ENCODE measurements at regions of chr10 and their contacts with region 1.

Region 1: GRCh38 chr10:124176349-124177176 is 83.2 kb upstream of the CHST15 start:
- DNase-seq: no peak
- H3K4me3 ChIP-seq: no peak overlapping the region
- H3K27ac ChIP-seq: no peak overlapping the region
- H3K4me1 ChIP-seq: no peaks in the 10 kb centered on the region
- H3K27me3 ChIP-seq: no peaks in the 10 kb centered on the region
- CTCF ChIP-seq: no peak
- POLR2A ChIP-seq: no peak

Region 2: GRCh38 chr10:123548770-123549169 is 627.8 kb before region 1 on chr10:
- intact Hi-C with region 1: loop called (anchors 10 kb)
- DNase-seq: no peak
- H3K4me3 ChIP-seq: no peak overlapping the region
- H3K27ac ChIP-seq: no peak overlapping the region
- H3K4me1 ChIP-seq: no peaks in the 10 kb centered on the region
- H3K27me3 ChIP-seq: peaks cover 0 to 26% of the 10 kb centered on the region in 2 donors
- CTCF ChIP-seq: no peak
- POLR2A ChIP-seq: no peak

Region 3: GRCh38 chr10:124063750-124064603 is 112.6 kb before region 1 on chr10:
- intact Hi-C with region 1: no loop called
- DNase-seq: no peak
- H3K4me3 ChIP-seq: peak overlapping the region in 2 of 3 donors; percentile 15 to 39
- H3K27ac ChIP-seq: peak overlapping the region; percentile 46 to 82
- H3K4me1 ChIP-seq: peaks cover 4 to 5% of the 10 kb centered on the region in 2 donors
- H3K27me3 ChIP-seq: no peaks in the 10 kb centered on the region
- CTCF ChIP-seq: no peak
- POLR2A ChIP-seq: no peak